WTC11 (cell line): ENCODE measurements at regions of chr1 and their contacts with region 1.

Region 1: DNA sequence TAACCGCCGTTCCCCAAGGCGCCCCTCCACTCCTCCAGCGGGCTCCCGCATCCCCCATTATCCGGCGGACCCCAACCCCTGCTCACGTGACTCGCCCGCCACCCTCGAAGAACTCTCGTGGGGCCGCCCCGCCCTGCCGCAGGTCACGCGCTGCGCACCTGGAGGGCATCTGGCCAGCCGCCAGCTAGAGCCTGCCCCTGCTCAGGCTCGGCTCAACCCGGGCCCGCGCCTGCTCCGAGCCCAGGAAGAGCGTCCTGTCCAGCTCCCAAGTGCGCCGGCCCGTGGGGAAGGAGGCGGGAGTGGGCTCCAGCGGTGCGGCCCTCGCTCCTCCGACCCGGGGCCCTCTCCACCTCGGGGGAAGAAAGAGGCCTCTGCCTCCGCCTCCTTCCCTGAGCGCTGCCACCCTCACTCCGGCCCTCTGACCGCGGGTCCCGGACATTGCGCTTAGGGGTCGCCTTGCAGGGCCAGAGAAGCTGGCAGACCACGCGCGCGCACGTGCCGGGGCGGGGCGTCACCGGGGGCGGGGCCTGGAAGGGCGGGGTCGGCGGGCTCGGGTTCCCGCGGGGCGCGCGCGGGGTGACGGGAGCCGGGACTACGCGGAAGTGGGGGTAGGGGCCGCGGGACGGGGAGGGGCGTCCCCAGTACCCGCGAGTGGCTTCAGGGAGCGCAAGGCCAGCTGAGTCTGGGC is 28.4 kb downstream of the HMGN2 start:
- DNase-seq: peak; percentile 89
- ATAC-seq: peak; percentile 63
- H3K4me3 Mint-ChIP-seq: peak overlapping the region; percentile 81
- H3K27ac Mint-ChIP-seq: peak overlapping the region; percentile 76; the same call in 1 of the 2 replicates
- H3K4me1 Mint-ChIP-seq: no peaks in the 10 kb centered on the region
- H3K27me3 Mint-ChIP-seq: no peaks in the 10 kb centered on the region; the same call in 1 of the 2 replicates
- CTCF ChIP-seq: no peak

Region 2: GRCh38 chr1:26363549-26364448 is 136.8 kb before region 1 on chr1:
- CTCF ChIA-PET with region 1: no interaction called
- POLR2A ChIA-PET with region 1: no interaction called
- DNase-seq: peak; percentile 87
- ATAC-seq: peak; percentile 54
- H3K4me3 Mint-ChIP-seq: no peak overlapping the region
- H3K27ac Mint-ChIP-seq: no peak overlapping the region
- H3K4me1 Mint-ChIP-seq: peaks cover 26% of the 10 kb centered on the region
- H3K27me3 Mint-ChIP-seq: peaks cover 43% of the 10 kb centered on the region
- CTCF ChIP-seq: peak; percentile 79

Region 3: DNA sequence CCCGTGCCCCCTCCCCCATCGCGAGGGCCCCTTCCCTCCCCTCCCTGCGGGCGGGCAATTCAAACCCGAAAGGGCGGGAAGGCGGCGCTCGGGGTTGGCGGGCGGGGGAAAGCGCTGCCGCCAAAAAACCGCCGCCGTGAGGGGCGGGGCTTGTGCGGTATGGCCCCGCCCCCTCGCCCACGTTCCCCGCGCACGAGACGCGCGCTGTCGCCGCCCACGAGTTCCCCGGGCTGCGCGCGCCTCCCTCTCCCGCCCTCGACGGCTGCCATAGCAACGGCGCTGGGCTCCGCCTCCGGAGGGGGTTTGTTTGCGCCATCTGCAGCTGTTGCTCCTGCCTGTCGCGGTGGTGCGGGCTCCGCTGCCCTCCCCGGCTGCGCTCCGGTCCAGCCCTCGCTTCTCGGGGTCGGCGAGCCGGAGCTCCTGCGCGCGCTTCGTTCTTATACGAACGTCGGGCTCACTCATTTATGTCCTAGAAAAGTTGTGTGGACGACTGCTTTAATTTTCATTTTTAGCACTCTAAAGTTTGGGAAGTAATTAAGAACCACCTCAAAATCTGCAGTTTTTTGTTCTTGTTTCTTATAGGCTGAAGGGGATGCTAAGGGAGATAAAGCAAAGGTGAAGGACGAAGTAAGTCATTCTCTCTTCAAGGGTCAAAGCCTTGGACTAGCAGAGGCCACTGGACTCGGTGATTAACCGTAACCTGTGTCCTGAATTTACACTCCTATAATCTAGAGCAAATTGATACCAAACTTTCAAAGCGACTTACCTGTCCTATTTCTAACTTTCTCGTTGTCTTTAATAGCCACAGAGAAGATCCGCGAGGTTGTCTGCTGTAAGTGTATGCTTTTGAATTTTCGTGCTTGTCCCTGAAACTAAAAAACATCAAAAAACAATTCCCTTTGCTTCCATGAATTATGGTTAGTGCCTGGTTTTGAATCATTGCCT is 27.5 kb before region 1 on chr1:
- CTCF ChIA-PET with region 1: interaction called, 18 read pairs
- POLR2A ChIA-PET with region 1: interaction called, 19 read pairs
- DNase-seq: peak; percentile 96
- ATAC-seq: peak; percentile 59
- H3K4me3 Mint-ChIP-seq: peak overlapping the region; percentile 89
- H3K27ac Mint-ChIP-seq: peak overlapping the region; percentile 86
- H3K4me1 Mint-ChIP-seq: peaks cover 31% of the 10 kb centered on the region
- H3K27me3 Mint-ChIP-seq: no peaks in the 10 kb centered on the region; the same call in 1 of the 2 replicates
- CTCF ChIP-seq: no peak

Region 4: DNA sequence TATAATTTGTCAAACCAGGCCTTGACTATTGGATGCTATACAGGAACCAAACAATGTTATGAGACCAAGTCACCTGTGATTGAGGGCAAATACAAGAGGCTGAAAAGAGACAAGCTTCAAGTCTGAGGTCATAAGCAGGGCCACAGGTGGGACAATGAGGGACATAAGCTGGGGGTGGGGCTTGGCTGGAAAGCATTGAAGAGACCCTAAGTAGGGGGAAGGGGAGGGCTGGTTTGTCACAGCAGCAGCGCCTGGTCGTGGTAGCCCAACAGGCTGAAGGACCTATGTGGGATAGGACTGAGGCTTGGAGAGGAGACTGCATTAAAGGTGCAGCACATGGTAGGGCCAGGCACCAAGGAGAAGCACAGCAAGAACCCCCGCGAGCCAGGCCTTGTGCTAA is 10.5 kb before region 1 on chr1:
- CTCF ChIA-PET with region 1: interaction called, 25 read pairs
- POLR2A ChIA-PET with region 1: no interaction called
- DNase-seq: no peak
- ATAC-seq: peak; percentile 36; the same call in 1 of the 2 replicates
- H3K4me3 Mint-ChIP-seq: no peak overlapping the region
- H3K27ac Mint-ChIP-seq: no peak overlapping the region
- H3K4me1 Mint-ChIP-seq: no peaks in the 10 kb centered on the region
- H3K27me3 Mint-ChIP-seq: no peaks in the 10 kb centered on the region
- CTCF ChIP-seq: no peak

Region 5: DNA sequence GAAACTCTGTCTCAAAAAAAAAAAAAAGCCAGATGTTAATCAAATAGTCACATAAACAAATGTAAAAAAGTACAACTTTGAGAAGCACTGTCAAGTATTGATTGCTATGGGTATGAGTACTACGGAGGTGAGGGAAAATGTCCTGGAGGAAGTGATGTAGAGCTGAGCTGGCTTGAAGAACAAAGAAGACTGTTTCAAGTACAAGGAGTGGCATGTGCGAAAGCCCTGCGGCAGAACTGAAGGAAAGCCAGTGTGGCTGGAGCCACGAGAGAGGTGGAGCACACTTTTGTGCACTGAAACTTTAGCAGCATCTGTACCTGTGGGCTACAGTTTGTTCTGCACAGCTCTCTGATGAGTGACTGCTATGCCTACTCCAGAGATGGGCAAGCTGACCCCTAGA is 23.5 kb after region 1 on chr1:
- CTCF ChIA-PET with region 1: interaction called, 92 read pairs
- POLR2A ChIA-PET with region 1: interaction called, 34 read pairs
- DNase-seq: no peak
- ATAC-seq: no peak
- H3K4me3 Mint-ChIP-seq: no peak overlapping the region
- H3K27ac Mint-ChIP-seq: no peak overlapping the region
- H3K4me1 Mint-ChIP-seq: peaks cover 12% of the 10 kb centered on the region
- H3K27me3 Mint-ChIP-seq: peaks cover 19% of the 10 kb centered on the region
- CTCF ChIP-seq: no peak

Region 6: DNA sequence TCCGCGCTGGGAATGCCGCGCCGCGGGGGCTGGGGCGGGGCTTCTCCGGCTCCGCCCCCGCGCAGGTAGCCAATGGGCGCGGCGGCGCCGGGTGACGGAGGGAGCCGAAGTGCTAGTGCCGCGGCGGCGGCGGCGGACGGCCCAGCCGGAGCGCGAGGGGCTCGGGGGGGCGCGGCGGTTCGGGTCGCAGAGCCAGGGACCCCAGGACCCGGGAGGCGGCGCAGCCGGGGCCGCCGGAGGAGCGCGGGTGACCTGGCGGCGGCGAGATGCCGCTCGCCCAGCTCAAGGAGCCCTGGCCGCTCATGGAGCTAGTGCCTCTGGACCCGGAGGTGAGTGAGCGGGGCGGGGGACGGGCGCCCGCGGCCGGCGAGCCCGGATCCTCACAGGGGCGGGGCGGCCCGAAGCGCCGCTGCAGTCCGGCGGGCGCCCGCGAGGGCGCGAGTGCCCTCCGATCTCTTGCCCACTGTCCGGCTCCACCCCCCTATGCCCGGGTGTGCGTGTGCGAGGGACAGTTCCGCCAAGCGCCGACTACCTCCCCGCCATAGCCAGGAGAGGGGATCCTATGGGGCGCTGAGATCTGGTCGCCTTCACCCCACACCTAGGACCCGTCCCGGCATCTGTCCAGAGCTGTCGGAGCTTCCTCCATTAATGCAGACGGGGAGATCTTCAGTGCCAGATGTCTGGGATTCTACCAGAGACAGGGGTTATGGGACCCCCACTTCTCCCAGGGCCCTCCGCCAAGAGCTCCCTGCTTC is 29.2 kb after region 1 on chr1 and contains the start of gene RPS6KA1:
- CTCF ChIA-PET with region 1: interaction called, 92 read pairs
- POLR2A ChIA-PET with region 1: interaction called, 34 read pairs
- DNase-seq: peak; percentile 78
- ATAC-seq: peak; percentile 52
- H3K4me3 Mint-ChIP-seq: peak within 1 kb of the TSS; percentile 91
- H3K27ac Mint-ChIP-seq: peak within 1 kb of the TSS; percentile 94
- H3K4me1 Mint-ChIP-seq: peaks cover 26% of the 10 kb centered on the region
- H3K27me3 Mint-ChIP-seq: peaks cover 10% of the 10 kb centered on the region
- CTCF ChIP-seq: no peak
- total RNA-seq, gene RPS6KA1: 55.6 to 65.5 TPM (median 57.7 TPM) in 3 replicates

Region 7: DNA sequence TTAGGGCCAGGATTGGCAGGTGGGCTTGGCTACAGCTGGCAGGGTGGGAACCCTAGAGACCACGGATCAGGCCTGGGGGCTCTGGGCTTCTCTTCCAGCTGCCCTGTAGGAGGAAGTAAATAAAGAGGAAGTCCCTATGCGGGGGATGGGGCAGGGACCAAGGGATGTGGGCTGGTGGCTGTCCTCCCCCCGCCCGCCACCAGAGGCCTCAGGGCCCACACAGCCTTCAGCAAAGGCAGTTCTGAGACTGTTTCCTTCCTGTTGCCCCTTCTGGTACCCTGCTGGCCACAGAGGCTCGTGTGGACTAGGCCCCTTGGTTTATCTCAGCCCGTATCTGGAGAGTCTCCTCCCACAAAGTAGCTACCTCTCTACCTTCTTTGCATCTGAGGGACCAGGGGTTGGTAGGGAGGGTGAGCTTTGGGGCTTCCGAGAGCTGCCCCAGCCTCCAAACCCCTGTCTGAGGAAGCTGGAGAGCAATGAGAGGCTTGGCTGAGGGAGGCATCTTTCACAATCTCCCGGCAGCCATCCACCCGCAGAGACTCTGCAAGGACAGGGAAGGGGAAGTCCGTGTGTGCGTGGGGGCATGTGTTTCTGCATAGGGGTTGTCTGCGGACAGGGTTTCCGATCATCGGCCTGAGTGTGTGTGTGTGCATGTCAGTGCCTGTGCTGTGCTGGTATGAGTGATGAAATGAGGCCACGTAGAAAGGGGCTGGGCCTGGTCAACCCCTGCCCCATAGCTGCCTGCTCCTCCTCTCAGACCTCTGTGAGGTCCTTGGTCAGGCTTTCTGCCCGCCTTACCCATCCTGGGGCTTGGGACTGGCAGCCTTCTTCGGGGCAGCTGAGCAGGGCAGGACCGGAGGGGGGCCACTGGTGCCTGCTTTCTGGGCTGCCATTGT is 41.4 kb after region 1 on chr1:
- CTCF ChIA-PET with region 1: interaction called, 56 read pairs
- POLR2A ChIA-PET with region 1: interaction called, 9 read pairs
- DNase-seq: peak; percentile 73
- ATAC-seq: peak; percentile 93
- H3K4me3 Mint-ChIP-seq: no peak overlapping the region
- H3K27ac Mint-ChIP-seq: peak overlapping the region; percentile 40
- H3K4me1 Mint-ChIP-seq: peaks cover 26% of the 10 kb centered on the region
- H3K27me3 Mint-ChIP-seq: no peaks in the 10 kb centered on the region
- CTCF ChIP-seq: no peak

Region 8: GRCh38 chr1:26582836-26583460 is 82.3 kb after region 1 on chr1:
- CTCF ChIA-PET with region 1: interaction called, 11 read pairs
- POLR2A ChIA-PET with region 1: no interaction called
- DNase-seq: no peak
- ATAC-seq: no peak
- H3K4me3 Mint-ChIP-seq: no peak overlapping the region
- H3K27ac Mint-ChIP-seq: no peak overlapping the region
- H3K4me1 Mint-ChIP-seq: no peaks in the 10 kb centered on the region
- H3K27me3 Mint-ChIP-seq: no peaks in the 10 kb centered on the region
- CTCF ChIP-seq: no peak